SK-N-SH (cell line): ENCODE measurements at regions of chr3 and their contacts with region 1.

Region 1: GRCh38 chr3:5096336-5097008 is 25.6 kb upstream of the ARL8B start:
- DNase-seq: no peak
- H3K4me3 ChIP-seq: no peak overlapping the region
- H3K27ac ChIP-seq: no peak overlapping the region
- H3K4me1 ChIP-seq: peaks cover 0 to 3% of the 10 kb centered on the region in 2 experiments; a peak in 1 of 4 replicates
- H3K27me3 ChIP-seq: no peaks in the 10 kb centered on the region
- CTCF ChIP-seq: no peak
- EP300 ChIP-seq: no peak
- RAD21 ChIP-seq: no peak

Region 2: GRCh38 chr3:5122030-5122740 is 25.7 kb after region 1 on chr3 and contains the start of gene ARL8B:
- CTCF ChIA-PET with region 1: interaction called, 15 read pairs
- POLR2A ChIA-PET with region 1: no interaction called
- DNase-seq: peak; percentile 97
- H3K4me3 ChIP-seq: peak within 1 kb of the TSS; percentile 96 to 100
- H3K27ac ChIP-seq: peak within 1 kb of the TSS; percentile 79 to 84
- H3K4me1 ChIP-seq: peaks cover 7 to 8% of the 10 kb centered on the region in 2 experiments; a peak in 3 of 4 replicates
- H3K27me3 ChIP-seq: no peaks in the 10 kb centered on the region
- CTCF ChIP-seq: peak; percentile 96
- EP300 ChIP-seq: peak; percentile 36 to 37; a peak in 2 of 4 replicates
- RAD21 ChIP-seq: peak; percentile 52
- polyA plus RNA-seq, gene ARL8B: 16.2 and 21.9 TPM in 2 replicates